ENCODE measurements at regions of chr6 and their contacts with region 1.

Region 1: GRCh38 chr6:156767603-156768467 is 9.3 kb upstream of the ARID1B start:
- DNase-seq: peak; percentile 90
- ATAC-seq: peak; percentile 96
- H3K4me3 ChIP-seq: peak overlapping the region; percentile 56; the same call in 1 of the 2 replicates
- H3K27ac ChIP-seq: peak overlapping the region; percentile 63
- H3K4me1 ChIP-seq: peaks cover 19% of the 10 kb centered on the region
- H3K27me3 ChIP-seq: no peaks in the 10 kb centered on the region
- CTCF ChIP-seq: no peak
- EP300 ChIP-seq: peak; percentile 20 to 54; a peak in 3 of 4 replicates
- POLR2A ChIP-seq: no peak
- RAD21 ChIP-seq: 0 out of 2 replicates have a peak, but pooled peaks have one; percentile 15

Region 2: GRCh38 chr6:156729248-156729647 is 38.6 kb before region 1 on chr6:
- CTCF ChIA-PET with region 1: interaction called, 3 read pairs
- POLR2A ChIA-PET with region 1: interaction called, 4 read pairs
- RAD21 ChIA-PET with region 1: interaction called, 11 read pairs
- SMC1A ChIA-PET with region 1: interaction called, 9 read pairs
- in situ Hi-C with region 1: no loop called
- intact Hi-C with region 1: no loop called
- DNase-seq: peak; percentile 36
- ATAC-seq: peak; percentile 94
- H3K4me3 ChIP-seq: no peak overlapping the region
- H3K27ac ChIP-seq: no peak overlapping the region
- H3K4me1 ChIP-seq: peaks cover 2% of the 10 kb centered on the region; the same call in 1 of the 2 replicates
- H3K27me3 ChIP-seq: no peaks in the 10 kb centered on the region
- CTCF ChIP-seq: no peak
- EP300 ChIP-seq: no peak
- POLR2A ChIP-seq: no peak
- RAD21 ChIP-seq: no peak